ENCODE measurements at regions of chr4 and their contacts with region 1.

Region 1: DNA sequence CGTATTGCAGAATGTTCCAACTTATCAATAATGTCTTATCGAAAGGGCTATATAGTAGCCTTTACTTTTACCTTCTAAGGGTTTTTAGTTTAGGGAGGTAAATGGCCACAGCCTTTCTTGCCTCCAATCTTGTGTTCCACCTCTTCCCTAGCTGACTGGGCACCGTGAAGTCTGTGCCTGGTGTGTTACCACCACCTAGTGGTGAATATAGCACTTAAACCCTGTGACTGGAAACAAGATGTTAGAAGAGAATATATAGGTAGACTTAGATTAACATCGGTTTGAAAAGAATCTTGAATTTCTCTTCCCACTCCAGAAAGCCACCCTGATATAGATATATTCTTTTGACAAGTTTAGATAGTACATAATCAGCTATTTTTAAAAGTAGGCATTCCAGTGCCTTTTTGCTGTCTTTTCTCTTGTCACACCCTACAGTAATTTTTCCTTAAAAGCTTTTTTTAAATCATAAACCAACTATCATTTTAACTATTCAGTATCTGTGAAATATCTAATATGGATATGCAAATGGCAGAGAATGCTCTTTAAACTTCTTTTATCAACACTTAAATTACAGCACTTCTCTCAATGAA is 27.8 kb upstream of the ADH7 start:
- DNase-seq: peak; percentile 4 to 67 (median 25)
- ATAC-seq: peak; percentile 70
- H3K4me3 ChIP-seq: no peak overlapping the region
- H3K4me3 Mint-ChIP-seq: no peak overlapping the region
- H3K27ac ChIP-seq: no peak overlapping the region
- H3K27ac Mint-ChIP-seq: no peak overlapping the region
- H3K4me1 ChIP-seq: no peaks in the 10 kb centered on the region
- H3K4me1 Mint-ChIP-seq: no peaks in the 10 kb centered on the region
- H3K27me3 ChIP-seq: no peaks in the 10 kb centered on the region
- H3K27me3 Mint-ChIP-seq: peaks cover 18% of the 10 kb centered on the region
- CTCF ChIP-seq: peak; percentile 83

Region 2: DNA sequence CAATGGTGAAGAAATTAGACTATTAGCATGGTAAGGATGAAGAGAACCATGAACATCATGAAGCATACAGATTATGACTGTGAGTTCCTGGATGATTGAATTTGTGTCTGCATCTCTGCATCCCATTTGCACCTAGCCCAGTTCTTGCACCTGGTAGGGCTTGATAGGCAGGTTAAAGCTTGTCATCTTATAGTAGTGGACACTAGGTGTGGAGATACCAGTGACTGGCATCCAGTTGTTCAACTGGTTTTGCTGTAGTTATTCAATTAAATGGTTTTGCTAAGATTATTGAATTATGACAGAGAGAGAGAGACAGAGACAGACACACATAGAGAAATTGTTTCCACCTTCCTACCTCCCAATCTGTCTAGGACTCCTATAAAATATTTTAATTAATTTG is 32.9 kb before region 1 on chr4:
- CTCF ChIA-PET with region 1: no interaction called
- POLR2A ChIA-PET with region 1: no interaction called
- intact Hi-C with region 1: no loop called
- DNase-seq: no peak
- ATAC-seq: no peak
- H3K4me3 ChIP-seq: no peak overlapping the region
- H3K4me3 Mint-ChIP-seq: no peak overlapping the region
- H3K27ac ChIP-seq: no peak overlapping the region
- H3K27ac Mint-ChIP-seq: no peak overlapping the region
- H3K4me1 ChIP-seq: no peaks in the 10 kb centered on the region
- H3K4me1 Mint-ChIP-seq: no peaks in the 10 kb centered on the region
- H3K27me3 ChIP-seq: no peaks in the 10 kb centered on the region
- H3K27me3 Mint-ChIP-seq: peaks cover 4% of the 10 kb centered on the region
- CTCF ChIP-seq: no peak

Region 3: DNA sequence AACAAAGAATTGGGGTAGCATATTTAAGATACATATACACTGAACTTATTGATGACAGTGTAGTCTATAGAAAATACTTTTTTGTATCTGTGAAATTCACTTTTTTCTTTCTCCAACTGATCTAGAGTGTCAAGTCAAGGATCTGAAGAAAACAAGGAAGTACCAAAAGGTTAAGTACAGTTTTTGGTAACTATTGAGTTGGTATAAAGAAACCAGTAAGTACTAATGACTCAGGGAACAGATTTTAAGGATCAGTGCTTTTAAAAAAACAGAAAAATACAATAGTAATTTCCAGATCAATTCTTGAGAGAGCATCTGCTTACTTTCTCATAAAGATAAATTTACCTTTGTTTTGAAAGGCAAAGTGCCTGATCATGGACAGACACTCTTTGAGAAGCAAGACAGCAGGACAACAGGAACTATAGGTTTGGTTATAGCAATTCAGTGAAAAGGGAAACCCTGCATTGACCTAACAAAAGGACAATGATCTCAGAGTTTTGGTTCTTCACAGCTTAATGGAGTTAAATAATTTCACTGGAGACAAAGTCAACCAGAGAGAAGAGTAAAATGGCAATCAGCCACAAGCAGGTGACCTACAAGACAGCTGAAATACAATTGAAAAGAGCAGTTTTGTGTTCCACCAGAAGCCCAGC is 77.4 kb after region 1 on chr4:
- CTCF ChIA-PET with region 1: no interaction called
- POLR2A ChIA-PET with region 1: no interaction called
- intact Hi-C with region 1: loop called in 1 of 2 experiments (anchors 5 kb)
- DNase-seq: no peak
- ATAC-seq: no peak
- H3K4me3 ChIP-seq: no peak overlapping the region
- H3K4me3 Mint-ChIP-seq: no peak overlapping the region
- H3K27ac ChIP-seq: no peak overlapping the region
- H3K27ac Mint-ChIP-seq: no peak overlapping the region
- H3K4me1 ChIP-seq: no peaks in the 10 kb centered on the region
- H3K4me1 Mint-ChIP-seq: no peaks in the 10 kb centered on the region
- H3K27me3 ChIP-seq: peaks cover 0 to 4% of the 10 kb centered on the region in 2 experiments
- H3K27me3 Mint-ChIP-seq: no peaks in the 10 kb centered on the region
- CTCF ChIP-seq: no peak

Measured in CD4-positive, alpha-beta T cell (primary cell).